ENCODE measurements at regions of chr19 and their contacts with region 1.

Region 1: DNA sequence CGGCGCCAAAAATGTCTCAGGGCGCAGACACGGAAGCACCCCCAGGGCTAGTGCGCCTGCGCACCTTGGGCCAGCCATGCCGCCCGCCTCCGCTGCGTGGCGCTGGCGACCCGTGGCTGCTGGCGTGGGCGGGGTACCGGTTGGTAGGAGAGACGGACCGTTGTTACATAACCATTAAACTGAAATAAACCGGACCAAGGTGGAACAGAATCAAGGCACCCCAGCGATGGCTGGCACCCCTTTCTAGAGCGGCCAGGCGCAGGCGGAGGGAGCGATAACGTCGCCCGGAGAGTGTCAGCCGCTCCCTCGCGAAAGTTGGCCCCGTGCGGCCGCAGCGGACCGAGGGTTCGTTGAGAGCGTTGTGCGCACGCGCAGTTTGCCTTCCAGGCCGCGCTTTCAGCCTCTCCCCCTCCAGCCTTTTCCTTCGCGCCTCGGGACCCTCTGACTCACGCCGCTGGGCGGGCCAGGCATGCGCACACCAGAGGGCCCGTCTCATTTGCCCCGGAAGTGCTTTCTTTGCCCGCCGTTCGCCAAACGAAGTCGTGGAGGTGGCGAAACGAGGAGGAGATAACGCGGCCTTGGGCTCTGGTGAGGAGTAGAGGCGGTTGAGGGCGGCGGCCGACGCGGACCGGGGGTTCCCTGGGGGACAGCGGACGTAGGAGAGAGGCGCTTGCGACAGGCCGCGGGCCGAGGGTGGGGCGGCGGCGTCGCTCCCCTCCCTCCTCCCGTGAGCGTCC is at the starts of genes PLEKHJ1 and SF3A2:
- DNase-seq: peak; percentile 97
- H3K4me3 ChIP-seq: peak within 1 kb of the TSS; percentile 67 to 90 (median 84)
- H3K27ac ChIP-seq: peak within 1 kb of the TSS; percentile 79
- H3K4me1 ChIP-seq: peaks cover 38% of the 10 kb centered on the region
- H3K27me3 ChIP-seq: no peaks in the 10 kb centered on the region
- CTCF ChIP-seq: peak; percentile 93 to 100
- total RNA-seq, gene PLEKHJ1: 33.0 to 61.5 TPM
- total RNA-seq, gene SF3A2: 21.0 to 68.9 TPM

Region 2: GRCh38 chr19:1896508-1896907 is 340.0 kb before region 1 on chr19:
- CTCF ChIA-PET with region 1: no interaction called
- dilution Hi-C with region 1: no loop called
- in situ Hi-C with region 1: no loop called
- intact Hi-C with region 1: loop called (anchors 10 kb)
- DNase-seq: no peak
- H3K4me3 ChIP-seq: no peak overlapping the region
- H3K27ac ChIP-seq: no peak overlapping the region
- H3K4me1 ChIP-seq: peaks cover 7% of the 10 kb centered on the region
- H3K27me3 ChIP-seq: no peaks in the 10 kb centered on the region
- CTCF ChIP-seq: no peak

Region 3: GRCh38 chr19:2186071-2186846 is 50.2 kb before region 1 on chr19:
- CTCF ChIA-PET with region 1: no interaction called
- dilution Hi-C with region 1: loop called (anchors 5 kb)
- in situ Hi-C with region 1: no loop called
- intact Hi-C with region 1: no loop called
- DNase-seq: no peak
- H3K4me3 ChIP-seq: no peak overlapping the region
- H3K27ac ChIP-seq: no peak overlapping the region
- H3K4me1 ChIP-seq: peaks cover 4% of the 10 kb centered on the region
- H3K27me3 ChIP-seq: no peaks in the 10 kb centered on the region
- CTCF ChIP-seq: no peak

Region 4: DNA sequence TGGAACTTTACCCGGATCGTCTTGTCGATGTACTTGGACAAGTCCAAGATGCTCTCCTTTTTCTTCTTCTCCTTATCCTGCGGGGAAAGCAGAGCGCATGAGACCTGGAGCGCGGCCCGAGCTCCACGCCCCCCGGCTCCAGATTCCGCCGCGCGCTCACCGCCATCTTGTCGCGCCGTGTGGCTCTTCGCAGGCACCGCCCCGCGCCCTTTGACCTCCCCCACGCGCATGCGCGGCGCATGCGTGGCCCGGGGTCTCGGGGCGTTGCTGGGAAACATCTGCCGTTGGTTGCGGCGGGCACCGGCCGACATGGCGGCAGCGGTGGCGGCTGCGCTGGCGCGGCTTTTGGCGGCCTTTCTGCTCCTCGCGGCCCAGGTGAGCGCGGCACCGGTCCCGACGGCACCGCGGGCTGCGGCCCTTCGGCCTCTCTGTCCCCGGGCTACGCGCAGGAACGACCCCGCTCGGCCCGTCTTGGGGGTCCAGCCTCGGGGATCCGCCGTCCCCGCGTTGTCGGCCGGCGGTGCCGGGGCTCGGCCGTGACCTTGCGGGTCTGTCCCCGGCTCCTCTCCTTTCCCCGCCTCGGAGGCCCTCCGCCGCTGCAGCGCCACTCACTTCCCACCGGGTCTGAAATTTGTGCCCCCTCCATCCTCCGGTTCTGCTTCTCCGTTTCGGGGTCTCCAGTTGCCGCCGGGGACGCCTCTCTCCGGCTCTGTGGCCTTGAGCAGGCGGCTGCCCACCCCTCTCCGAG is 92.1 kb after region 1 on chr19 and contains the starts of genes LSM7 and SPPL2B:
- CTCF ChIA-PET with region 1: interaction called, 5 read pairs
- dilution Hi-C with region 1: loop called (anchors 5 kb)
- in situ Hi-C with region 1: no loop called
- intact Hi-C with region 1: no loop called
- DNase-seq: peak; percentile 83
- H3K4me3 ChIP-seq: peak within 1 kb of the TSS; percentile 69 to 81 (median 81)
- H3K27ac ChIP-seq: peak within 1 kb of the TSS; percentile 79
- H3K4me1 ChIP-seq: peaks cover 13% of the 10 kb centered on the region
- H3K27me3 ChIP-seq: no peaks in the 10 kb centered on the region
- CTCF ChIP-seq: no peak
- total RNA-seq, gene LSM7: 67.7 to 91.6 TPM
- total RNA-seq, gene SPPL2B: 21.8 to 50.7 TPM

Region 5: DNA sequence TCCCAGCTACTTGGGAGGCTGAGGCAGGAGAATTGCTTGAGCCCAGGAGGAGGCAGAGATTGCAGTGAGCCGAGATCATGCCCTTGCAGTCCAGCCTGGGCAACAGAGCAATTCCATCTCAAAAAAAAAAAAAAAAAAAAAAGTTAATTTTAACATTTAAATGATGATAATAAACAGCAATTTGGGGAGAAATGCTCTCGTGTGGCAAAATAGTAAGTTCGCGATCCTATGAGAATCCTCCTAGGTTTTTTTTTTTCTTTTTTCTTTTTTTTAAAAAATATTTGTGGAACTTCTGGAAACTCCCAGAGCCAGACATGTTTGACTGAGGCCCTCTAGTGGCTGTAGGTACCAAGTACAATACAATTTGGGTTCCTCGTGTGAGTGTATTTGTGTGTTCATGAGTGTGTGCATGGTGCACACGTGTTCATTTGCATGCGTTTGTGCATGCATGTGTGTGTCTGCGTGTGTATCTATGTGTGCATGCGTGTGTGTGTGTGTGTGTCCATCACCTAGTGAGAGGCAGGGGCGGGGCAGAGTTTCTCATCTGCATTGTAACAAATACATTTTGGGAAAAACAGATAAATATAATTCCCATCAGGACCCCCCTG is 154.7 kb after region 1 on chr19:
- CTCF ChIA-PET with region 1: interaction called, 3 read pairs
- dilution Hi-C with region 1: no loop called
- in situ Hi-C with region 1: no loop called
- intact Hi-C with region 1: loop called (anchors 1 kb)
- DNase-seq: peak; percentile 51
- H3K4me3 ChIP-seq: no peak overlapping the region
- H3K27ac ChIP-seq: no peak overlapping the region
- H3K4me1 ChIP-seq: no peaks in the 10 kb centered on the region
- H3K27me3 ChIP-seq: no peaks in the 10 kb centered on the region
- CTCF ChIP-seq: peak; percentile 76

Region 6: DNA sequence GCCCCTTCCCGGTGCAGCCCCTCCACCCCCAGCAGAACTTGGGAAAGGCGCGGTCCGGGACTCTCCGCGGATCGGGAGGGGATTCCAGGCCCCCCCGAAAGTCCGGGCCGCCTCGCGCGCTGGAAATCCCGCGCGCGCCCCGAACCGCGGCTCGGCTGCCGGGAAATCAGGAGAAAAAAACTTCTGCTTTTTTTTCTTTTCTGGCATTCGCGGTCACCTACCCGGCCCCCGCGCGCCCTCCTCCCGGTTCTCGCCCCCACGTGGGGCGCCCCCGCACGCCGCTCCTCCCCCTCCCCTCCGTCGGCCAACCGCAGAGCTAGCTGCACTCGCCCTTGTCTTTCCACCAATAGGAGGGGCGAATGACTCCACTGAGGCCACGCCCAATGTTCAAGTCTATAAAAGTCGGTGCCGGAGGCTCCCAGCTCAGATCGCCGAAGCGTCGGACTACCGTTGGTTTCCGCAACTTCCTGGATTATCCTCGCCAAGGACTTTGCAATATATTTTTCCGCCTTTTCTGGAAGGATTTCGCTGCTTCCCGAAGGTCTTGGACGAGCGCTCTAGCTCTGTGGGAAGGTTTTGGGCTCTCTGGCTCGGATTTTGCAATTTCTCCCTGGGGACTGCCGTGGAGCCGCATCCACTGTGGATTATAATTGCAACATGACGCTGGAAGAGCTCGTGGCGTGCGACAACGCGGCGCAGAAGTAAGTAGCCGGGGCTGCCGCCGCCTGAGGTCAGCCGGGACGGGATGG is 239.4 kb after region 1 on chr19 and contains the start of gene GADD45B:
- CTCF ChIA-PET with region 1: no interaction called
- dilution Hi-C with region 1: no loop called
- in situ Hi-C with region 1: no loop called
- intact Hi-C with region 1: loop called (anchors 5 kb)
- DNase-seq: peak; percentile 95
- H3K4me3 ChIP-seq: peak within 1 kb of the TSS; percentile 84 to 98 (median 94)
- H3K27ac ChIP-seq: peak within 1 kb of the TSS; percentile 77
- H3K4me1 ChIP-seq: peaks cover 23% of the 10 kb centered on the region
- H3K27me3 ChIP-seq: no peaks in the 10 kb centered on the region
- CTCF ChIP-seq: no peak
- total RNA-seq, gene GADD45B: 18.0 to 83.9 TPM

Region 7: GRCh38 chr19:2636897-2637683 is 400.6 kb after region 1 on chr19:
- CTCF ChIA-PET with region 1: no interaction called
- dilution Hi-C with region 1: no loop called
- in situ Hi-C with region 1: no loop called
- intact Hi-C with region 1: loop called (anchors 1 kb)
- DNase-seq: no peak
- H3K4me3 ChIP-seq: no peak overlapping the region
- H3K27ac ChIP-seq: no peak overlapping the region
- H3K4me1 ChIP-seq: peaks cover 11% of the 10 kb centered on the region
- H3K27me3 ChIP-seq: no peaks in the 10 kb centered on the region
- CTCF ChIP-seq: peak; percentile 55 to 92

Measured in mammary epithelial cell (primary cell).